A673 (cell line): ENCODE measurements at regions of chr12 and their contacts with region 1.

Region 1: GRCh38 chr12:43501703-43502102 is 50.3 kb downstream of the ADAMTS20 start:
- DNase-seq: peak; percentile 41
- H3K4me3 ChIP-seq: no peak overlapping the region
- H3K27ac ChIP-seq: no peak overlapping the region
- H3K4me1 ChIP-seq: no peaks in the 10 kb centered on the region
- H3K27me3 ChIP-seq: no peaks in the 10 kb centered on the region
- CTCF ChIP-seq: peak; percentile 67

Region 2: DNA sequence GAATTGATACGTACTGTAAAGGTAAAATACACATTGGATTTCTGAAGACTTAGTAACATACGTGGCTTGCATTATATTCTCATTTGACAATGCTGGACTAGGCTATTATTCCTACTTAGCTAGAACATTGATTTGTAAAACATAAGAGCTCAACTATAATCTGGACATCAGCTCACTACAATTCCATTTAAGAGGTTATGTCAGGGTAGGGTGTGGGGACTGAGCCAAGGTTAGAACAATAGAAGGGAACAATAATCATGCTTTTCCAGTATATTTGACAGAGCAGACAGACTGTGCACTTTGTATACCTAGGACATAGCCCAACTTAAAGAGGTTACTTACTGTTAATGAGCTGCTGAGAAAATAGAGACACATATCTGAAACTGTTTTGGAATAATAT is 1186.6 kb before region 1 on chr12:
- CTCF ChIA-PET with region 1: no interaction called
- POLR2A ChIA-PET with region 1: no interaction called
- intact Hi-C with region 1: no loop called
- DNase-seq: no peak
- H3K4me3 ChIP-seq: no peak overlapping the region
- H3K27ac ChIP-seq: no peak overlapping the region
- H3K4me1 ChIP-seq: no peaks in the 10 kb centered on the region
- H3K27me3 ChIP-seq: no peaks in the 10 kb centered on the region
- CTCF ChIP-seq: no peak

Region 3: DNA sequence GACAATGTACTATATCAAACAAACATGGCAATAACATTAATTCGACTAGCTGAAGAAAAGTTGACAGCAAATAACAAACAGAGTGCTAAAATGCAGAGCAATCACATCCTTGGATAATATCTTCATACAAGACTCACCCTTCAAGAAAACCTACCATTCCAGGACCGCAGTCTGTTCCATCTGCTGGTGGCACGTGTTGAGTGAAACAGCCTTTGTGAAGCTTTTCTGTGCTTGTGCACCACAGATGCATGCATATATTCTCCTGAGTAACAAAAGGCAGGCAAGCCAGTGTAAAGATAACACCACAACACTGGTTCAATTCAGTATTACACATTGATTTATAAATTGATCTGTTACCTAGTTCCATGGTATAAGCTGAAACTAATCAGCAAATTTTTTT is 39.0 kb before region 1 on chr12:
- CTCF ChIA-PET with region 1: no interaction called
- POLR2A ChIA-PET with region 1: no interaction called
- intact Hi-C with region 1: no loop called
- DNase-seq: no peak
- H3K4me3 ChIP-seq: no peak overlapping the region
- H3K27ac ChIP-seq: no peak overlapping the region
- H3K4me1 ChIP-seq: no peaks in the 10 kb centered on the region
- H3K27me3 ChIP-seq: no peaks in the 10 kb centered on the region
- CTCF ChIP-seq: no peak

Region 4: DNA sequence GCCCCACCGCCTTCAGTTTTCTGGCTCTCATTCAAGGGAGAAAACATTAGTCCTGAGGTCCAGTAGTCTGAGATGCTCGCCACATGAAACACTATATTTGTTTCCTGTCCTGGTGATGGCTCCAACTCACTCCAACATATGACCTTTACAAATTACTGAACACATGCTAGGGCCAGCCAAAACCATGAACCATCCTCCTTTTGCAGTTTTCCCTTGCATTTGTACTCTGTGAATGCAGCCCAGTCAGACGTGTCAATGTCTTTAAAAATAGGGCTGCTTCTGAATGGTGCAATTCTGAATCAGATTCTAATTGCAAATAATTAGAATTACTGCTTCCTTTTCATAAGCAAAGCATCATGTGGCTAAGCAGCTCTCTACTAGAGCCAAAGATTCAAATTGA is 14.3 kb after region 1 on chr12:
- CTCF ChIA-PET with region 1: no interaction called
- POLR2A ChIA-PET with region 1: no interaction called
- intact Hi-C with region 1: no loop called
- DNase-seq: no peak
- H3K4me3 ChIP-seq: no peak overlapping the region
- H3K27ac ChIP-seq: no peak overlapping the region
- H3K4me1 ChIP-seq: no peaks in the 10 kb centered on the region
- H3K27me3 ChIP-seq: no peaks in the 10 kb centered on the region
- CTCF ChIP-seq: no peak

Region 5: DNA sequence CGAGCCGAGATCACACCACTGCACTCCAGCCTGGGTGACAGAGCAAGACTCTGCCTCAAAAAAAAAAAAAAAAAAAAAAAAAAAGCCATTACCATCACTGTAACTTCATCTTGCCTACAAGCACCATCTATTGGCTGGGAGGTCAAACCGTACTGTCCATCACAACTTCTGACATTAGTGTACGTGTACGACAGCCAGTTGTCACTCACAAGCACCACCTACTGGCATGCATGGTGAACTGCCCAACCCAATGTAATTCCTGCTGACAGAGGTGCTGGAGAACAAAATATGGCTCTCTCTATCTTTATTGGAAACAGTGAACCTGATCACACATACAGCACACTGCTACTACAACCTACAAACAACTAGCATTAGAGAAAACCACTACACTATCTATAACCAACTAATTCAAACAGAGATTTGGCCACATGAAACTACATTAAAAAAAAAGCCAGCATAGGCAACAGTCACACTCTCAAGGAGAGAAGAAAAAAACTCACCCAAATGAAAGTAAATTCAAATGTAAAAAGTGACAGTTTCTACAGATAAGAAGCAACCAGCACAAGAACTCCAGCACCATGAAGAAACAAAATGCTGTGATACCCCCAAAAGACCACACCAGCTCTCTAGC is 174.6 kb after region 1 on chr12:
- CTCF ChIA-PET with region 1: interaction called, 4 read pairs
- POLR2A ChIA-PET with region 1: no interaction called
- intact Hi-C with region 1: loop called (anchors 10 kb)
- DNase-seq: peak; percentile 62
- H3K4me3 ChIP-seq: no peak overlapping the region
- H3K27ac ChIP-seq: no peak overlapping the region
- H3K4me1 ChIP-seq: no peaks in the 10 kb centered on the region
- H3K27me3 ChIP-seq: peaks cover 10% of the 10 kb centered on the region
- CTCF ChIP-seq: peak; percentile 79

Region 6: DNA sequence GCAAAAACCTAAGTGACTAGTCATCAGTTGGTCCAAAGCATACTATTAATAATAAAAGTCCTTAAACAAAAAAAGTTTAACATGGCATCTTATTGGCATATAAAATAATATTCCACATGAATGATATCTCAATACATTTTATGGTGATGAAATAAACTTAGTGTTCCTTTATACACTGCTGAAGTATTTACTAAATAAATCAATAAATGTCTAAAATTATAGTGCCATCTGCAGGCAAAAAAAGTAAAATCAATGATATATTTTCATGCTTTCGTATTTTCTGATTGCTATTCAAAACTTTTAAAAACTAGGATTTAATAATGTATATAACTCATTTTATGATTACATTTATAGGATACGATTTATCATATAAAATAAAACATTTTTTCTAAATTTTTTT is 226.4 kb after region 1 on chr12:
- CTCF ChIA-PET with region 1: no interaction called
- POLR2A ChIA-PET with region 1: no interaction called
- intact Hi-C with region 1: loop called (anchors 5 kb)
- DNase-seq: peak; percentile 31
- H3K4me3 ChIP-seq: no peak overlapping the region
- H3K27ac ChIP-seq: no peak overlapping the region
- H3K4me1 ChIP-seq: no peaks in the 10 kb centered on the region
- H3K27me3 ChIP-seq: no peaks in the 10 kb centered on the region
- CTCF ChIP-seq: peak; percentile 59

Region 7: GRCh38 chr12:43882578-43883178 is 381.0 kb after region 1 on chr12:
- CTCF ChIA-PET with region 1: interaction called, 6 read pairs
- POLR2A ChIA-PET with region 1: no interaction called
- intact Hi-C with region 1: loop called (anchors 5 kb)
- DNase-seq: peak; percentile 67
- H3K4me3 ChIP-seq: no peak overlapping the region
- H3K27ac ChIP-seq: no peak overlapping the region
- H3K4me1 ChIP-seq: no peaks in the 10 kb centered on the region
- H3K27me3 ChIP-seq: no peaks in the 10 kb centered on the region
- CTCF ChIP-seq: peak; percentile 85